Colonic mucosa (tissue), 4 donors: ENCODE measurements at regions of chr18 and their contacts with region 1.

Region 1: GRCh38 chr18:57561728-57562423 is 24.6 kb downstream of the FECH start:
- DNase-seq: no peak
- H3K4me3 ChIP-seq: no peak overlapping the region
- H3K27ac ChIP-seq: no peak overlapping the region
- H3K4me1 ChIP-seq: no peaks in the 10 kb centered on the region
- H3K27me3 ChIP-seq: no peaks in the 10 kb centered on the region
- CTCF ChIP-seq: peak; percentile 90

Region 2: GRCh38 chr18:56748698-56749268 is 813.1 kb before region 1 on chr18:
- intact Hi-C with region 1: loop called (anchors 5 kb)
- DNase-seq: no peak
- H3K4me3 ChIP-seq: no peak overlapping the region
- H3K27ac ChIP-seq: no peak overlapping the region
- H3K4me1 ChIP-seq: no peaks in the 10 kb centered on the region
- H3K27me3 ChIP-seq: no peaks in the 10 kb centered on the region
- CTCF ChIP-seq: peak; percentile 47